ENCODE measurements at regions of chr12 and their contacts with region 1.

Region 1: GRCh38 chr12:120012067-120012621 is 23.1 kb downstream of the BICDL1 start:
- DNase-seq: peak; percentile 94
- H3K4me3 Mint-ChIP-seq: peak overlapping the region; percentile 73
- H3K27ac Mint-ChIP-seq: peak overlapping the region; percentile 97
- H3K4me1 Mint-ChIP-seq: peaks cover 87% of the 10 kb centered on the region
- H3K27me3 Mint-ChIP-seq: no peaks in the 10 kb centered on the region

Region 2: DNA sequence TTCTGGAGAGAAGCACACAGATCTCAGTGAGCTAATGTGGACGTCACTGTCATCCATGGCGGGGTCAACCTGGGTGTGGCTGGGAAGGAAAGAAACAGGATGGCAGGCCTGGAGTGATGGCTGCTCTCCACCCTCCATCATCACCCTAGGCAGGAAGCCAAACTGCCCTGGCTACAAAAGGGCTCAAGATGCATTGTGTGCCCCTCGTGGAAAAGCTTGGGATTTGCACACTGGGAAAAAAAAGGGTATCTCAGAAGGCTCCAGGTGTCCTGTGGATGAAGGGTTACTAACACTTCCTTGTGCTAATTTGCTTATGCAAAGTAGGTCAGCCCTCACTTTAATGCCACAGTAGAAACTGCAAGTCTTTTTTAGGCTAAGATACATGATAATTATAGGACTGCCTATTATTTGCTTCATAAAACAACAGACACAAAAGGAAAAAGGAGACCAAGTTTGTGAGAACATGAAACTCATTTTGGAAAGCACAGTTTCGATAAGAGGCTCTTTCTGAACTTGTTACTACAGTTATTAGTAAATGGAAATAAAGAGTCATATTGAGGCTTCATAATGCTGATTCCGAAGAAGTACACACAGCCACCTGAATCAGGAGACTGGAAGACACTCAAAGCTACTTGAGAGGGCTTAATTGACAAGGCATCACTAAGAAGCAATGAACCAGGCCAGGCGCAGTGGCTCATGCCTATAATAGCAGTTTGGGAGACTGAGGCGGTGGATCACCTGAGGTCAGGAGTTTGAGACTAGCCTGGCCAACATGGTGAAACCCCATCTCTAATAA is 1976.7 kb before region 1 on chr12:
- CTCF ChIA-PET with region 1: no interaction called
- intact Hi-C with region 1: loop called (anchors 10 kb)
- DNase-seq: peak; percentile 55
- H3K4me3 Mint-ChIP-seq: no peak overlapping the region
- H3K27ac Mint-ChIP-seq: peak overlapping the region; percentile 87
- H3K4me1 Mint-ChIP-seq: peaks cover 57% of the 10 kb centered on the region
- H3K27me3 Mint-ChIP-seq: no peaks in the 10 kb centered on the region

Region 3: DNA sequence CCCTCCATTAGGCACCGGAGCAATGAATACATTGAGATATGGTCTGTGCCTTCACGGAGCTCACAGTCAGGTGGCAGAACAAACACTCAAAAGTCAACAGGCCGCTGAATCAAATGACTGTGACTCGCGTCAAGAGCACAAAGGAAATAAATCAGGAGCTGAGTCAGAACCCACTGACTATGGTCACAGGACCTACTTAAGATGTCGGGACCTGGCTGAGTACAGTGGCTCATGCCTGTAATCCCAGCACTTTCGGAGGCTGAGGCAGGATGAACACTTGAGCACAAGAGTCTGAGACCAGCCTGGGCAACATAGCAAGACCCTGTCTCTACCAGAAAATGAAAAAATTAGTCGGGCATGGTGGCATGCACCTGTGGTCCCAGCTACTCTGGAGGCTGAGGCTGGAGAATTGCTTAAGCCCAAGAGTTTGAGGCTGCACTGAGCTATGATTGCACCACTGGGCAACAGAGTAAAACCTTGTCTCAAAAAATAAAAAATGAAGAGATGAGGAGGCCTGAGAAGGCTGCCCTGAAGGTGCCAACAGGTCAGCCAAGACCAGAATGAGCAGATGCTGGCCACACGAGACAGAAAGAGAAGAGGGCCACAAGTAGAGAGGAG is 398.7 kb before region 1 on chr12:
- CTCF ChIA-PET with region 1: no interaction called
- intact Hi-C with region 1: no loop called
- DNase-seq: no peak
- H3K4me3 Mint-ChIP-seq: no peak overlapping the region
- H3K27ac Mint-ChIP-seq: no peak overlapping the region
- H3K4me1 Mint-ChIP-seq: no peaks in the 10 kb centered on the region
- H3K27me3 Mint-ChIP-seq: peaks cover 11% of the 10 kb centered on the region

Region 4: GRCh38 chr12:119876761-119877638 is 135.1 kb before region 1 on chr12 and contains the start of gene CIT:
- CTCF ChIA-PET with region 1: no interaction called
- intact Hi-C with region 1: loop called (anchors 1 kb)
- DNase-seq: peak; percentile 94
- H3K4me3 Mint-ChIP-seq: peak within 1 kb of the TSS; percentile 97
- H3K27ac Mint-ChIP-seq: peak within 1 kb of the TSS; percentile 42
- H3K4me1 Mint-ChIP-seq: peaks cover 13% of the 10 kb centered on the region
- H3K27me3 Mint-ChIP-seq: no peaks in the 10 kb centered on the region
- total RNA-seq, gene CIT: 78.6 to 78.8 TPM

Region 5: DNA sequence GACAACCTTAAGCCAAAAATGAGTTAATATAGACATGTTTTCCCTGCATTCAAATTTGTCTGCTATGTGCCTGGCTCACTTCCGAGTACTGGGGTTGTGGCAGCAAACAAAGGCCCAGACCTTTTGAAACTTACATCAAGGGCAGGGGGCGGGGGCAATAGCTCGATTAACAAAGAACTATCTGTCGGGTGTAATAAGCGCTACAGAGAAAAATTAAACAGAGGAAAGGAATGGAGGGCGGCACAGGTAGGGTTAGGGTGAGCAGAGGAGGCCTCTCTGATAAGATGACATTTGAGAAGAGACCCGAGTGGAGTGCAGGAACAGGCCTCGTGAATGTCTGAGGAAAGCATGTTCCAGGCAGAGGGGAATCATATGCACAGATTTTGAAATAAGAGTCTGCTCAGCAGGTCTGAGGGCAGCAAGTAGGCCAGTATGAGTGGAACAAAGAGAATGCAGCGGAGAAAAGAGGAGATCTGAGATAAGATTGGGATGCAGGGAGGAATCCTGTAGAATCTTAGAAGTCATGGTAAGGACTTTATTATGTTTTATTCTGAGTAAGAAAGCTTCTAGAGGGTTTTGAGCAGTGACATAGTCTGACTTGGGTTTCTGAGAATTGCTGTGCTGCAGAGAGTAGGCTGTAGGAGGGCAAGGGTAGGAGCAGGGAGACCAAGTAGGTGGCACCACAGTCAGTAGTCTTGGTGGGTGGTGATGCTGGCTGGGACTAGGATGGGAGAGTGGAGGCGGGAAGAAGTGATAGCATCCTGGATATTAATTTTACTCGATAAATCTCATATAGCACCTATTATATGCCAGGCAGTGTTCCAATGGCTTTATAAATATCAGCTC is 29.5 kb after region 1 on chr12:
- CTCF ChIA-PET with region 1: no interaction called
- intact Hi-C with region 1: loop called (anchors 1 kb)
- DNase-seq: peak; percentile 53
- H3K4me3 Mint-ChIP-seq: peak overlapping the region; percentile 7
- H3K27ac Mint-ChIP-seq: peak overlapping the region; percentile 55
- H3K4me1 Mint-ChIP-seq: peaks cover 36% of the 10 kb centered on the region
- H3K27me3 Mint-ChIP-seq: no peaks in the 10 kb centered on the region

Region 6: DNA sequence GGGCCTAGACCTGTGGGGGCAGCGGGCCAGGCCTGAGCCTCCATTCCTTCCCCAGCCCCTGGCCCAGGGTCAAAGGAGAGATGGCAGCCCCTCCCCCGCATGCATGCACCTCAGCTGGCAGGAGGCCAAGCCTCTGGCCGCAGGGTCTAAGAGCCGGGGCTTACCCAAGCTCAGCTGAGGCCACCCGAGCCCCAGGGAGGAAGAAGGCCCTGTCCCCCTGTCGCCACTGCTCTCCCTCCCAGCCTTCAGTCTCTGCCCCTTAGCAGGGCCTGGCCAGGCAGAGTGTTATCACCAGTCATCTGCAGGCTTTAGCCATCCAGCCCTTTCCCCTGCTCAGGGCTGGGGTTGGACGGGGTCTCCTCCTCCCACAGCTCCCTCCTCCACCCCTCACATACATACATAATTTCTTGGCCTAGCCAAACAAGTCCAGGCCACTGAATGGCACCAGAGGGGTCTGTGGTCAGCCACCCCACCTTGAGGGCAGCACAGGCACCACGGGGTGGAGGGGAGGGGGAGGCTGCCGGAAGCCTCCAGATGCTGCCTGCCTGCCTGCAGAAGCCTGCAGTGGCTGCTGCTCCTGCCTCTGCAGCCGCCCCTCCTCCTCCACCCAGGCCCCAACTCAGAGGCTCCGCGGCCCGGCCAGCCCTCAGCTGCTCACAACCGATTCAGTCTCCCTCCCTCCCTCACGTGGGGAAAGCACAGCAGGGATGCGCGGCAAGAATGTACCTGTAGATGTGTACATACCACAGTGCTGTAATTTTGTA is 81.6 kb after region 1 on chr12:
- CTCF ChIA-PET with region 1: no interaction called
- intact Hi-C with region 1: no loop called
- DNase-seq: no peak
- H3K4me3 Mint-ChIP-seq: no peak overlapping the region
- H3K27ac Mint-ChIP-seq: peak overlapping the region; percentile 66
- H3K4me1 Mint-ChIP-seq: peaks cover 4% of the 10 kb centered on the region
- H3K27me3 Mint-ChIP-seq: no peaks in the 10 kb centered on the region

Region 7: GRCh38 chr12:120199595-120200306 is 187.6 kb after region 1 on chr12:
- CTCF ChIA-PET with region 1: no interaction called
- intact Hi-C with region 1: loop called (anchors 1 kb)
- DNase-seq: peak; percentile 51
- H3K4me3 Mint-ChIP-seq: peak overlapping the region; percentile 93
- H3K27ac Mint-ChIP-seq: peak overlapping the region; percentile 99
- H3K4me1 Mint-ChIP-seq: peaks cover 42% of the 10 kb centered on the region
- H3K27me3 Mint-ChIP-seq: no peaks in the 10 kb centered on the region

Region 8: GRCh38 chr12:120292661-120293531 is 280.8 kb after region 1 on chr12 and contains the start of gene RNU4-1:
- CTCF ChIA-PET with region 1: no interaction called
- intact Hi-C with region 1: loop called (anchors 1 kb)
- DNase-seq: peak; percentile 88
- H3K4me3 Mint-ChIP-seq: no peak within 1 kb of the TSS
- H3K27ac Mint-ChIP-seq: no peak within 1 kb of the TSS
- H3K4me1 Mint-ChIP-seq: peaks cover 6% of the 10 kb centered on the region
- H3K27me3 Mint-ChIP-seq: no peaks in the 10 kb centered on the region
- total RNA-seq, gene RNU4-1: 685 to 1,294 TPM

Measured in activated naive CD4-positive, alpha-beta T cell treated with anti-CD3 and anti-CD28 coated beads for 36 hours (primary cell).